Tibial artery (tissue), 4 donors: ENCODE measurements at regions of chr2 and their contacts with region 1.

Region 1: DNA sequence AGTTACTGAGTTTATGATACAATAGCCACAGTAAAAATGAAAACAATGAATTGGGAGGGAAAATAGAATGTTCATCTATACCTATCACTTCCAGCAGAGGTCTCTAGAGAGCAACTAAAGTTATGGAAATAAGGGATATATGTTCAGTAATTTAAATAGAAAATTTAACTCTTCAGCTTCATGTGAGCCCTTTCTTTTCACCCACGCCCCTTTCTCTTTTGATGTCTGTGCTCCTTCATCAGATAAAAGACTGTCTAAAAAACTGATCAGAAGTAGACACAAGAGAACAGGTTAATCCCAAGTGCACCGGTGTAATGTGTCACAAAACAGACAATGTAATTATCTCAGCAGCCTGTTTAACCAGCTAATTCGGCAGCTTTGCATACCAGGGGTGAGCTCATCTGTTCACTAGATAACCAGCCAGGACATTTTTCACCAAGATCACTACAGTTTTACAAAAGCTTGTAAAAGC is 238.5 kb upstream of the ERBB4 start:
- DNase-seq: no peak
- H3K4me3 ChIP-seq: no peak overlapping the region
- H3K27ac ChIP-seq: no peak overlapping the region
- H3K4me1 ChIP-seq: no peaks in the 10 kb centered on the region
- H3K27me3 ChIP-seq: no peaks in the 10 kb centered on the region
- CTCF ChIP-seq: peak; percentile 64 to 66

Region 2: GRCh38 chr2:211816754-211817153 is 960.3 kb before region 1 on chr2:
- intact Hi-C with region 1: no loop called
- DNase-seq: no peak
- H3K4me3 ChIP-seq: no peak overlapping the region
- H3K27ac ChIP-seq: no peak overlapping the region
- H3K4me1 ChIP-seq: no peaks in the 10 kb centered on the region
- H3K27me3 ChIP-seq: no peaks in the 10 kb centered on the region
- CTCF ChIP-seq: no peak

Region 3: DNA sequence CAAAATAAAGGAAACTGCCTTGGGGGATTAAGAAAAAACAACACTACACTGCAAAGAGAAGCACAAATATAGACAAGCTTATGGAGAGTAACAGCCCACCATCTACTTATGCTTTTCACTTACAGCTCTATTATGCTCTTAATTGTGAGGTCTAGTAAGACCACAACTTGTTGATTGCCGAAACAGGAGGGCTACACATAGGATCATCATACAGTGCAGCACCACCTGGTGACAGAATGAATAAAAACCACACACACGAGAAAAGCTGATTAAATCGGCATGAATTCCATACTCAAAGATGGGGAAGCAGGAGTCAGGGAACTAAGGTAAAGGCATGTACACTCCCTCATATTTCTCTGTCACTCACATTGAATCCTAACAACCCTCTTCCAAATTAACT is 115.1 kb after region 1 on chr2:
- intact Hi-C with region 1: no loop called
- DNase-seq: no peak
- H3K4me3 ChIP-seq: no peak overlapping the region
- H3K27ac ChIP-seq: no peak overlapping the region
- H3K4me1 ChIP-seq: no peaks in the 10 kb centered on the region
- H3K27me3 ChIP-seq: no peaks in the 10 kb centered on the region
- CTCF ChIP-seq: no peak

Region 4: DNA sequence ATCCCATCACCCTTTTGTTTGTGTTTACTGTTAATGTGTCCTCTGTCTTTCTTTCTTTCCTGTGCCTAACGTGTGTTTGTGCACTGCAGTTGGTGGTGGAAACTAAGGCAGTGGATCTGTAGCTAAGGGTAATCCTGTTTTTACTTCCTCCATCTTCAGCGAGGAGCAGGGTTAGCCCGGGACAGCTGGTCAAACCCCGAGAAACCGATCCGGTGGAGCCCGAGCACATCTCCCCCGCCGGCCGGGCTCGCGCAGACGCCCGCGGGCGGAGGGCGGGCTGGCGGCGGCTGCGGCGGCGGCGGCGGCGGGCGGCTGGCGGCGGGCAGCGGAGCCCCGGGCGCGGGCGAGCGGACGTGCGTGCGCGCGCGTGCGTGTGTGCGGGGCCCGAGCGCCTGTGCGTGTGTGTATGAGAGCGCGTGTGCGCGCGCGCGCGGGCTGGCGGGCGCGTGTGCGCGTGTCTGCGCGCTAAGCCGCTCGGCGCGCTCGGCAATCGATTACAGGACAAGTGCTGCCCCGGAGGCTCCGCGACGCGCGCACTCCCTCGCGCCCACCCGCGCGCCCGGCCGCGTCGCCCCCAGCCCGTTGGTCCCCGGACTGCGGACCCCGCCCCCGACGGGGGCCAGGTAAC is 374.5 kb after region 1 on chr2 and contains the start of gene IKZF2:
- intact Hi-C with region 1: loop called (anchors 2 kb)
- DNase-seq: peak; percentile 79 to 90
- H3K4me3 ChIP-seq: peak within 1 kb of the TSS; percentile 76 to 82
- H3K27ac ChIP-seq: peak within 1 kb of the TSS; percentile 94 to 96
- H3K4me1 ChIP-seq: peaks cover 0 to 39% (median 5%) of the 10 kb centered on the region in 4 donors
- H3K27me3 ChIP-seq: no peaks in the 10 kb centered on the region
- CTCF ChIP-seq: no peak